ENCODE measurements at regions of chr3 and their contacts with region 1.

Region 1: GRCh38 chr3:108477511-108478147 is 32.8 kb downstream of the MYH15 start:
- DNase-seq: peak; percentile 13 to 72
- ATAC-seq: peak; percentile 52 to 75; a peak in 3 of 6 replicates
- H3K4me3 ChIP-seq: no peak overlapping the region
- H3K27ac ChIP-seq: no peak overlapping the region
- H3K4me1 ChIP-seq: peaks cover 12% of the 10 kb centered on the region
- CTCF ChIP-seq: peak; percentile 82
- EP300 ChIP-seq: no peak
- POLR2A ChIP-seq: no peak
- RAD21 ChIP-seq: peak; percentile 70 to 75

Region 2: DNA sequence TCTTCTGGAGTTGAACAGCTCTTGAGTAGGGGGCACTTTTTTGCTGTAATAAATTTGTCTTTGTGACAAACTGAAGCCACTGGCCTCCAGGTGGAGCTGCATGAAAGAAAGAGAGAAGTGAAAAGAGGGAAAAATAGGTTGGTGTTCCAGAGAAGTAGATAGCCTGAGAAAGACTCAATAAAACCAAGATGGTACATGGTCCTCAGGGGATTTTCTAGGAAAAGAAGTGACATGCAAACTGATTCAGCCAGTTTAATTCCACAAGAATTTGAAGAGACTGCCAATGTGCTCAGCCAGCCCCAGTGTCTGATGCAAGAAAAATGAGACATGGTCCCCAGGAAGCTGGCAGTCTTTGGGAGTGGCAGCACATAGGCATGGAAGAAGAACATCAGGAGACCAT is 539.5 kb before region 1 on chr3:
- CTCF ChIA-PET with region 1: interaction called, 10 read pairs
- POLR2A ChIA-PET with region 1: interaction called, 4 read pairs
- DNase-seq: peak in 1 of 2 experiments; percentile 29
- ATAC-seq: no peak; a peak in 2 of 6 replicates
- H3K4me3 ChIP-seq: no peak overlapping the region
- H3K27ac ChIP-seq: no peak overlapping the region
- H3K4me1 ChIP-seq: no peaks in the 10 kb centered on the region
- CTCF ChIP-seq: peak; percentile 49
- EP300 ChIP-seq: no peak
- POLR2A ChIP-seq: no peak
- RAD21 ChIP-seq: peak; percentile 66 to 68

Region 3: DNA sequence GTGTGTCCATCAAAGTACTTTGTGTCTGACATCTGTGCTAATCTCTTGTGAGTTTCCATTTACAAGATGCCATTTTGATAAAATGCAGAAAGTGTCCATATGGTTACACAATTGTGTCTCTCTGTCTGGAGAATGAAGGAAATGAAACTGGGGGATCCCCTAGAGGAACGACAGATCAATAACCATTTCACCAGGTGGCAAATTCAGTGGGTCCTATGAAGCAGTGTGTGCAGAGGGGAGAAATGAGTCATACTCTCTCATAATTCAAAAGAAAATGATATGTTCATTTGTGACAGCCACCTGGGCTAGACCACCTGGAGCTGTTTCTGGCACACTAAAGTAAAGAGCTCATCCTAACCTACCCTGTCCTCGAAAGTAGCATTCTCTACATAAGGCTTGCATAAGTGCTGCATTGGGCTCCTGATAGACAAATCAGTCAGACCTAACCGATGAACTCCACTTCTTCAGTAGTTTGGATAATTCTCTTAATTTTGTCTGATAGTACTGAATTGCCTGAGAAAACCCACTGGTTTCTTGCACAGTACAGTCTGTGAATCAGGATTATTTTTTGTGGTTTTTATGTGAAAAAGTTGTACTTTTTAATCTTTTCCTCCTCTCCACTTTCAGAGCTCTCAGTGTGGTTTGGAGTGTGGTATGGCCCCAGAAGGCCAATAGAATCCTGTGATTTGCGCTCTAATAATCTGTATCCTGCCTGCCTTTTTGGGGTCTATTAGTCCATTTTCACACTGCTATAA is 376.5 kb before region 1 on chr3:
- CTCF ChIA-PET with region 1: no interaction called
- POLR2A ChIA-PET with region 1: no interaction called
- DNase-seq: no peak
- ATAC-seq: no peak
- H3K4me3 ChIP-seq: no peak overlapping the region
- H3K27ac ChIP-seq: no peak overlapping the region
- H3K4me1 ChIP-seq: no peaks in the 10 kb centered on the region
- CTCF ChIP-seq: no peak
- EP300 ChIP-seq: no peak
- POLR2A ChIP-seq: no peak
- RAD21 ChIP-seq: no peak

Region 4: DNA sequence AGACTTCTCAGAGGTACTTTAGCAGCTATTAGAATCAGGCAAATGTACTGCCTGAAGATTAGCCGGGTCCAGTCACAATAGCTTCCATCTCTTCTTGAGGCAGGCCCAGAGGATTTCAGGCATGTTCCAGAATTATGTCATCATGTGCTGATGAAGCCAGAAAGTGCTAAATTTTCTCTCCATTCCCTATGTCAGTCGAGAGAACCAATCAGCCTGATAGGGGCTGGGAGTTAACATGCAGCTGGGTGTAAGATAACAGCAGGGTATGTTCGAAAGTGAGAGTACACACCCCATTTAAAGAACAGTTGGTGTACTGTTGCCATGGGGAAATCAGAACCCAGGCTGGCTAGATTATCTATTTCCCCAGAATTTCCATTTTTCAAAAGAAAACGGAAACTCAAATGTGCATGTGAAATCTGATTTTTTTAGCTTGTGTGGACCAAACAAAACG is 15.9 kb before region 1 on chr3:
- CTCF ChIA-PET with region 1: interaction called, 10 read pairs
- POLR2A ChIA-PET with region 1: no interaction called
- DNase-seq: no peak
- ATAC-seq: no peak
- H3K4me3 ChIP-seq: no peak overlapping the region
- H3K27ac ChIP-seq: no peak overlapping the region
- H3K4me1 ChIP-seq: 0 out of 3 replicates have a peak, but pooled peaks cover 3% of the 10 kb centered on the region
- CTCF ChIP-seq: no peak
- EP300 ChIP-seq: no peak
- POLR2A ChIP-seq: no peak
- RAD21 ChIP-seq: no peak

Region 5: GRCh38 chr3:108538083-108538482 is 60.5 kb after region 1 on chr3:
- CTCF ChIA-PET with region 1: no interaction called
- POLR2A ChIA-PET with region 1: no interaction called
- DNase-seq: no peak
- ATAC-seq: no peak
- H3K4me3 ChIP-seq: no peak overlapping the region
- H3K27ac ChIP-seq: no peak overlapping the region
- H3K4me1 ChIP-seq: no peaks in the 10 kb centered on the region
- CTCF ChIP-seq: no peak
- EP300 ChIP-seq: no peak
- POLR2A ChIP-seq: no peak
- RAD21 ChIP-seq: no peak

Region 6: GRCh38 chr3:108578064-108578463 is 100.4 kb after region 1 on chr3:
- CTCF ChIA-PET with region 1: no interaction called
- POLR2A ChIA-PET with region 1: no interaction called
- DNase-seq: no peak
- ATAC-seq: no peak
- H3K4me3 ChIP-seq: no peak overlapping the region
- H3K27ac ChIP-seq: no peak overlapping the region
- H3K4me1 ChIP-seq: no peaks in the 10 kb centered on the region
- CTCF ChIP-seq: no peak
- EP300 ChIP-seq: no peak
- POLR2A ChIP-seq: no peak
- RAD21 ChIP-seq: no peak

Region 7: DNA sequence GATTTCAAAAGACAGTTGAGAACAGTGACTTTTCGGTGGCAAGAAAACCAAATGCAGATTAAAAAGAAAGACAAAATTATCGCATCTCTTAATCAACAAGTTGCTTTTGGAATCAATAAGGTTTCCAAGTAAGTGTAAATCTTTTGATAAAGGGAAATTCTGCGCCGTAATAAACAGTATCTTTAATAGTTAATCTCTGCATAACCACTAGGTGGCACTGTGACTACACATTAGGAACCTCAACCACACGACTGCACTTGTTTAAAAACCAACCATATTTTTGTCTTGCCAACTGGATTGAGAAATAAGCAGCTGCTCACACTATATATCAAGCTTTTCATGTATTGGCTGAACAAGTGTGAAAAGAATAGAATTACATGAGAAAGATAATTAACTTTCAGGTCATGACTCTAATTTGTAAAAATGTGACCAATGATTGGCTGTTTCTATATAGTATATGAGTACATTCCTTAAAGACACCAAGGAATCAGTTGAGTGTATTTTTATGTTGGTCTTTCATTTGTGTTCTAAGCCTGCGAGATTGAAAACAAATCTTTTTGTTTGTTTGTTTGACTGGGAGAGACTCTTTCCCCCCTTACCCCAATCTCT is 184.6 kb after region 1 on chr3:
- CTCF ChIA-PET with region 1: no interaction called
- POLR2A ChIA-PET with region 1: no interaction called
- DNase-seq: peak; percentile 42 to 69
- ATAC-seq: peak; percentile 73 to 85; a peak in 5 of 6 replicates
- H3K4me3 ChIP-seq: no peak overlapping the region
- H3K27ac ChIP-seq: no peak overlapping the region
- H3K4me1 ChIP-seq: no peaks in the 10 kb centered on the region
- CTCF ChIP-seq: peak; percentile 83
- EP300 ChIP-seq: no peak
- POLR2A ChIP-seq: no peak
- RAD21 ChIP-seq: peak; percentile 85

Measured in A549 (cell line).